IMR-90 (cell line): ENCODE measurements at regions of chr21 and their contacts with region 1.

Region 1: DNA sequence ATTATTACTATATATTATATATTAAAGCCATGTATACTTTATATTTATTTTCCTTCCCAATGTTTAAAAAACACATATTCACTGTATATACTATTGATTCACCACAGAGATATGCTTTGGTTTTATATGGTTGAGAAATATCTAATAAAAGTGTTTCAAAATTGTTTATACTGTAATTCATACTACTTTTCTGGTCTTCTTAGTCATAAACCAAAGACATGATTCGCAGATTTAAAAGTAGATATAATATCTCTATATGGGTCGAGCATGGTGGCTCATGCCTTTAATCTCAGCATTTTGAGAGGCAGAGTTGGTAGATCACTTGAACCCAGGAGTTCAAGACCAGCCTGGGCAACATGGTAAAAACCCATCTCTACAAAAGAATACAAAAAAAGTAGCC is 738.4 kb downstream of the USP25 start:
- DNase-seq: peak; percentile 31
- ATAC-seq: peak; percentile 35
- H3K4me3 ChIP-seq: no peak overlapping the region
- H3K27ac ChIP-seq: no peak overlapping the region
- H3K4me1 ChIP-seq: no peaks in the 10 kb centered on the region
- H3K27me3 ChIP-seq: no peaks in the 10 kb centered on the region
- CTCF ChIP-seq: no peak
- POLR2A ChIP-seq: no peak
- RAD21 ChIP-seq: no peak

Region 2: DNA sequence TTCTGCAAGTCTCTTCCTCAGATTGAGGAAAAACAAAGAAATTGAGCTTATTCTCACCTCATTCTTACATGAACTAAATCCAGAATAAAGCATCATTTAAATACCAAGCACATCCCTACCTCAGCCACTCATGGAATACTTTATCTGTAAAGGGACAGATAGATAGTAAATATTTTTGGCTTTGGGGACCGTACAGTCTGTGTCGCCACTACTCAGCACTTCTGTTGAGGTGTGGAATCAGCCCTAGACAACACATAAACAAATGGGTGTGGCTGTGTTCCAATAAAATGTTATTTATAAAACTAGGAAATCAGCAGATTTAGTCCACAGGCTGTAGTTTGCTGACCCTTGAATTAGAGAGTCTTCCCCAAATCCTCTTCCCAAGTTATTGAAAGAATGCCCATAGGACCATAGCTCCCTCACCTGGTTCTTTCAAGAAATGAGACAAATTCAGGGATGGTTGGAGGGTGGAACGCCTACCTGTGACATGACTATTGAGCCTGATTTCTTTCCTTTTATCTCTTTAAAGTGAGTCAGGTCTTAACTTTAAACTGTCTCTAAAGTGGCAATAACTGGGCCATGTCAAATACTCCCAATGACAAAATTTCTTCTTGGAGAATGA is 140.1 kb after region 1 on chr21:
- CTCF ChIA-PET with region 1: interaction called, 4 read pairs
- POLR2A ChIA-PET with region 1: no interaction called
- dilution Hi-C with region 1: no loop called
- in situ Hi-C with region 1: no loop called
- intact Hi-C with region 1: loop called (anchors 5 kb)
- DNase-seq: no peak
- ATAC-seq: no peak
- H3K4me3 ChIP-seq: no peak overlapping the region
- H3K27ac ChIP-seq: no peak overlapping the region
- H3K4me1 ChIP-seq: no peaks in the 10 kb centered on the region
- H3K27me3 ChIP-seq: no peaks in the 10 kb centered on the region
- CTCF ChIP-seq: peak; percentile 26
- POLR2A ChIP-seq: no peak
- RAD21 ChIP-seq: peak; percentile 41